Heart right ventricle (tissue), 16 donors: ENCODE measurements at regions of chr2 and their contacts with region 1.

Region 1: DNA sequence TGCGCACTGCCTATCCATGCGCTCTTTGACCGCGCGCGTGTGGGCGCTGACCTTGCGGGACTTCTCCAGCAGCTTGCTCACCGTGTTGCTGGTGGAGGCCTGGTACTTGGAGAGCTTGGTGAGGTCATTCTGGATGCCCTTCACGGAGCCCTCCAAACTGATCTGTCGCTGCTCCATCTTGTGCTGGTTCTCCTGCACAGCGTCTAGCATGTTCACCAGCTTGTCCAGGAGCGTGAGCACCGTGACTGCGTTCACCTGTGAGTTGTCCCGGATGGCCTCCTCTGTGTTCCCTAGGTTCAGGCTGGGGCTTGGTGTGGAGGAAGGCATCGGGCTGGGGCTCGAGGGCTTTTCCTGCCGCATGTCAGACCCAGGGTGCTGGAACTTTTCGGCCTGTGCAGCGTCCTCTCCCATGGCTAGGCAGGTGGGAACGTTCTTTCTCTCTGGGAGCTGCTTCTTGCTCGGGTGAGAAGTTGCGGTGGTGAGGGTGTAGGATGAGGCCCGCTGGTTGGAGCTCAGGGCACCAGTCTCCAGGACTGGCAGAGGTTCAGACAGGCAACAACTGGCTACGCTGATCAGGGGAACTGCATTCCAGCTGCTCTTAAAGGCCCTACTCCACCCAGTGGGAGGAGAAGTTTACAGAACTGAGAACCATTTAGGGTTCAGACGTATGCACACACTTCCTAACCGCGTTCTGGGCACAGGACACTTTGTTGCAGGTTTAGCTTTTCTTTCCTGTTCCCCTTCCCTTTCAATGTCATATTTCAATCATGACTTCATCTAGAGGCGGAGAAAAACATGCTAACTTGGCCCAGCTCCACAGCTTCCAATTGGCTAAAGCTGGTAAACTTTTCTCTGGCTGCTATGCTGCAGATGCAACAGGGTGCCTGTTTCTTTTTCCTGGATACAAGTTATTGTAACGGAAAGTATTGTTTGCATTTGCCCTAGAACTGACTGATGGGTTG is at the start of gene CAVIN2:
- DNase-seq: peak; percentile 50 to 88
- ATAC-seq: peak; percentile 79 to 92 (median 88)
- H3K4me3 ChIP-seq: peak within 1 kb of the TSS; percentile 62 to 81 (median 76)
- H3K27ac ChIP-seq: peak within 1 kb of the TSS; percentile 87 to 97 (median 94)
- H3K4me1 ChIP-seq: peaks cover 10 to 57% (median 42%) of the 10 kb centered on the region in 9 donors
- H3K27me3 ChIP-seq: no peaks in the 10 kb centered on the region
- CTCF ChIP-seq: peak in 3 of 9 donors; percentile 16 to 23 (median 17)
- total RNA-seq, gene CAVIN2: 73.5 to 126 (median 101) TPM

Region 2: DNA sequence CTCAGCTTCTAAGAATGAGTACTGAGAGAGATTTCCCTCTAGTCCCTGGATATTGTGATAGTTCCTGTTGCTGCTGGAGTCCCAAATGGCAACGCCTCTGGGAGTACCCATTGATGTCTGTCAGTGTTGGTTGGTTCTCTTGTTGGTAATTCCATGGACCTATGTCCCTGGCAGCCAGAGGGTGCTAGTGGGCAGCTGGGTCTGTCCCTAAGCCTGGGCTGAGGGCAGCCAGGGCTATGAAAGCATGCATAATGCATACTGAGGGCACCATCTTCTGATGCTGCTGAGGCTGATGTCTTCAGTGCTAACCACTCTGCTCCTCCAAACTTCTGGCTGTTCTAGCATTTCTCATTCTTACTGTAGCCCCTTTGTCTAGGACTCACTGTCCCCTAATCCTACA is 133.0 kb before region 1 on chr2:
- intact Hi-C with region 1: no loop called
- DNase-seq: no peak
- ATAC-seq: no peak
- H3K4me3 ChIP-seq: no peak overlapping the region
- H3K27ac ChIP-seq: no peak overlapping the region
- H3K4me1 ChIP-seq: no peaks in the 10 kb centered on the region
- H3K27me3 ChIP-seq: no peaks in the 10 kb centered on the region
- CTCF ChIP-seq: no peak

Region 3: GRCh38 chr2:191869178-191869577 is 22.4 kb after region 1 on chr2:
- intact Hi-C with region 1: loop called in 2 of 10 experiments (anchors 2 kb)
- DNase-seq: no peak
- ATAC-seq: no peak
- H3K4me3 ChIP-seq: no peak overlapping the region
- H3K27ac ChIP-seq: peak overlapping the region in 3 of 10 donors; percentile 84 to 88 (median 88)
- H3K4me1 ChIP-seq: peaks cover 7 to 60% (median 42%) of the 10 kb centered on the region in 9 donors
- H3K27me3 ChIP-seq: no peaks in the 10 kb centered on the region
- CTCF ChIP-seq: peak in 3 of 9 donors; percentile 13 to 21 (median 16)

Region 4: DNA sequence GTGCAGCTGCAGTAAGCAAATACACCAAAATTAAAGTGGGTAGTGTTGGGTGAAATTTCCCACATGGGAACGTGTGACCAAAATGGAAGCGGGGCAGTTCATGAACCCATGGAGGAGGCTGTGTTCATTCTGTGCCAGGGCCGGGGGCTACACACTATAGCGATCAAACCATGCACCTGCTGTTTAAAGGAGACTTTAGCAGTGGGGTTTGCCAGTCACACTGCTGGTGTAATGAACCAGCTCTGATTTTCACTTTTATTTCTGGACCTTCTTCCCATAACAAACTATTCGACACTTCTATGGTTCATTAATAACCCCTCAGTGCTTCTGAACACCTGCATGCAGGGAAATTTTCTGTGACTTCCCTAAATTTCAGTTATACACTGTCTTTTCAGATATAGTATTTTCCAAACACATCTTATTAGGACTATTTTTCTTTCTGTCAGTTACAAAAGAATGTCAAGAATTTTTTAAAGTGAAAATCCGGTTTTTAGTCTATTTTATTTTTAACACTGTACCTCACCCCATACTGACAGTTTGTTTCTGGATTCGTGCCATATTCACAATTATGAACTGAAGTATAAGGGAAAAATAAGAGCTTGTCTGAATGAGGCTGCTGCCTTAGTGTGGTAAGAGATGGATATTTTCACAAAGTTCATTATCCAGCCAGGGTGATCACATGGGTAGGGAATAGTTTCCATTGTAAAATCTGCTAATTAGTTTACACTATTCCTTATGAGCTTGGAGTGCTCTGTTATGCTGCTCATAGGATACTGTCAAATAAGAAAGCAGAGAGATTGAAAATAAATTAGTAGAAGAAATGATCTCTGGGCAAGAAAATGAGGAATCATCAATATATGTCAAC is 111.4 kb after region 1 on chr2:
- intact Hi-C with region 1: no loop called
- DNase-seq: no peak
- ATAC-seq: no peak
- H3K4me3 ChIP-seq: no peak overlapping the region
- H3K27ac ChIP-seq: no peak overlapping the region
- H3K4me1 ChIP-seq: peaks cover 0 to 22% (median 7%) of the 10 kb centered on the region in 9 donors
- H3K27me3 ChIP-seq: no peaks in the 10 kb centered on the region
- CTCF ChIP-seq: no peak